Esophagus muscularis mucosa (tissue), 4 donors: ENCODE measurements at regions of chr12 and their contacts with region 1.

Region 1: GRCh38 chr12:79573820-79574219 is 116.9 kb downstream of the PAWR start:
- DNase-seq: no peak
- H3K4me3 ChIP-seq: no peak overlapping the region
- H3K27ac ChIP-seq: no peak overlapping the region
- H3K4me1 ChIP-seq: no peaks in the 10 kb centered on the region
- H3K27me3 ChIP-seq: no peaks in the 10 kb centered on the region
- CTCF ChIP-seq: no peak
- EP300 ChIP-seq: no peak
- POLR2A ChIP-seq: no peak

Region 2: GRCh38 chr12:79512053-79512452 is 61.8 kb before region 1 on chr12:
- intact Hi-C with region 1: no loop called
- DNase-seq: no peak
- H3K4me3 ChIP-seq: no peak overlapping the region
- H3K27ac ChIP-seq: no peak overlapping the region
- H3K4me1 ChIP-seq: no peaks in the 10 kb centered on the region
- H3K27me3 ChIP-seq: no peaks in the 10 kb centered on the region
- CTCF ChIP-seq: no peak
- EP300 ChIP-seq: no peak
- POLR2A ChIP-seq: no peak

Region 3: GRCh38 chr12:79624378-79624777 is 50.6 kb after region 1 on chr12:
- intact Hi-C with region 1: loop called (anchors 10 kb)
- DNase-seq: no peak
- H3K4me3 ChIP-seq: no peak overlapping the region
- H3K27ac ChIP-seq: no peak overlapping the region
- H3K4me1 ChIP-seq: peaks cover 0 to 4% (median 0%) of the 10 kb centered on the region in 4 donors
- H3K27me3 ChIP-seq: no peaks in the 10 kb centered on the region
- CTCF ChIP-seq: no peak
- EP300 ChIP-seq: no peak
- POLR2A ChIP-seq: no peak

Region 4: DNA sequence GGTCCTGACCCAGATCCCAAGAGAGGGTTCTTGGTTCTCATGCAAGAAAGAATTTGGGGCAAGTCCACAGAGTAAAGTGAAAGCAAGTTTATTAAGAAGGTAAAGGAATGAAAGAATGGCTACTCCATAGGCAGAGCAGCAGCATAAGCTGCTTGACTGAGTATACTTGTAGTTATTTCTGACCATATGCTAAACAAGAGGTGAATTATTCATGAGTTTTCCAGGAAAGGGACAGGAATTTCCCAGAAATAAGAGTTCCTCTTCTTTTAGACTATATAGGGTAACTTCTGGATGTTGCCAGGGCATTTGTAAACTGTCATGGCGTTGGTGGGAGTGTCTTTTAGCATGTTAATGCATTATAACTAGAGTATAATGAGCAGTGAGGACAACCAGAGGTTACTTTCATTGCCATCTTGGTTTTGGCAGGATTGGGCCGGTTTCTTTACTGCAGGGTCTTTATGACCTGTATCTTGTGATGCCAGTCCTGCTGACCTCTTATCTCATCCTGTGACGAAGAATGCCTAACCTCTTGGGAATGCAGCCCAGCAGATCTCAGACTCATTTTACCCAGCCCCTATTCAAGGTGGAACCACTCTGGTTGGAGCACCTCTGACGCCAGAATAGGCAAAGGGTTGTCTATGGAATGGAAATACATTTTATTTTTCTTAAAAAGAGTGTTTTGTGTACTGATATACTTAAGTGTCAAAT is 639.3 kb after region 1 on chr12:
- intact Hi-C with region 1: no loop called
- DNase-seq: no peak
- H3K4me3 ChIP-seq: no peak overlapping the region
- H3K27ac ChIP-seq: no peak overlapping the region
- H3K4me1 ChIP-seq: peaks cover 0 to 22% (median 15%) of the 10 kb centered on the region in 4 donors
- H3K27me3 ChIP-seq: no peaks in the 10 kb centered on the region
- CTCF ChIP-seq: no peak
- EP300 ChIP-seq: no peak
- POLR2A ChIP-seq: no peak